Mucosa of descending colon (tissue), 3 donors: ENCODE measurements at regions of chr9 and their contacts with region 1.

Region 1: GRCh38 chr9:114911167-114911821 is 19.1 kb downstream of the TNFSF8 start:
- DNase-seq: peak in 1 of 3 donors; percentile 59
- ATAC-seq: peak; percentile 65
- H3K4me3 ChIP-seq: no peak overlapping the region
- H3K4me1 ChIP-seq: no peaks in the 10 kb centered on the region
- CTCF ChIP-seq: peak; percentile 27

Region 2: DNA sequence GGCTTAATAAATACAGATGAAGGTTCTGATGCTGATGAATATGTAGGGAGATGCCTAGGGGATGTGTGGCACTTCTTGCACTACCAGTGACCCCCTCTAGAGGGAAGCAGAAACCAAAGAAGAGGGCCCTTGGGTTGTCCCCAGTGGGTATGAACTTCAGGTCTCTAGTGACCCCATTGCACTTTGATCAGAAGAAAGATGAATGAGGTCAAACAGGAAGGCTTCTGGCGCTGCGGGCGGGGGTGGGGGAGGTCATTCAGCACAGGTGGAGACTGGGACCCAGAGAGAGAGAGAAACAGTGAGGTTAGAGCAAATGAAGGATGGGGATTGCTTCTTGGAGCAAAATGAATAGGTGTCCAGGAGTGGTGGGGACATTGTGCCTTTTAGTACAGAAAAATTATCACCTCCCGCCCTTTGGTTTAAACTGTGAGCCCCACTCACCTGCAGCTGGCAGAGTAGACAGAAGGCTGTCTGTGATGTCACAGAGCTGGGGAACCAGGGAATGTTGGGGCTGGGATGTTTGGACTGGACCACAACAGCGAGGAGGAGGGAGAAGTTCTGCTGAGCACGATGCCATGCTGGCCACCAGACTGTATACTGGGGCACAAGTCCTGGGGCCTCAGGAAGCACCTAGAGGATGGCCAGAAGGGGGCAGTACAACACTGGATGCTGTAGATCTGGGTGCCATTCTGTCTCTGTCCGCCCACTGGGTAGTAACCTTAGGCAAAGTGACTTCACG is 229.5 kb before region 1 on chr9 and contains the start of gene TEX48:
- intact Hi-C with region 1: loop called in 1 of 2 experiments (anchors 10 kb)
- DNase-seq: peak; percentile 59 to 90 (median 63)
- ATAC-seq: peak; percentile 99
- H3K4me3 ChIP-seq: no peak within 1 kb of the TSS
- H3K4me1 ChIP-seq: no peaks in the 10 kb centered on the region
- CTCF ChIP-seq: peak; percentile 57
- total RNA-seq, gene TEX48: not detected

Region 3: GRCh38 chr9:114738581-114739316 is 172.5 kb before region 1 on chr9:
- intact Hi-C with region 1: loop called (anchors 2 to 5 kb)
- DNase-seq: peak in 2 of 3 donors; percentile 70 to 84
- ATAC-seq: peak; percentile 99
- H3K4me3 ChIP-seq: no peak overlapping the region
- H3K4me1 ChIP-seq: no peaks in the 10 kb centered on the region
- CTCF ChIP-seq: peak; percentile 54

Region 4: GRCh38 chr9:114754581-114754980 is 156.7 kb before region 1 on chr9:
- intact Hi-C with region 1: no loop called
- DNase-seq: no peak
- ATAC-seq: peak; percentile 26
- H3K4me3 ChIP-seq: no peak overlapping the region
- H3K4me1 ChIP-seq: no peaks in the 10 kb centered on the region
- CTCF ChIP-seq: no peak

Region 5: GRCh38 chr9:114981070-114981469 is 69.8 kb after region 1 on chr9:
- intact Hi-C with region 1: no loop called
- DNase-seq: peak in 1 of 3 donors; percentile 11
- ATAC-seq: peak; percentile 83
- H3K4me3 ChIP-seq: no peak overlapping the region
- H3K4me1 ChIP-seq: no peaks in the 10 kb centered on the region
- CTCF ChIP-seq: no peak